Endothelial cell of umbilical vein (primary cell): ENCODE measurements at regions of chr3 and their contacts with region 1.

Region 1: DNA sequence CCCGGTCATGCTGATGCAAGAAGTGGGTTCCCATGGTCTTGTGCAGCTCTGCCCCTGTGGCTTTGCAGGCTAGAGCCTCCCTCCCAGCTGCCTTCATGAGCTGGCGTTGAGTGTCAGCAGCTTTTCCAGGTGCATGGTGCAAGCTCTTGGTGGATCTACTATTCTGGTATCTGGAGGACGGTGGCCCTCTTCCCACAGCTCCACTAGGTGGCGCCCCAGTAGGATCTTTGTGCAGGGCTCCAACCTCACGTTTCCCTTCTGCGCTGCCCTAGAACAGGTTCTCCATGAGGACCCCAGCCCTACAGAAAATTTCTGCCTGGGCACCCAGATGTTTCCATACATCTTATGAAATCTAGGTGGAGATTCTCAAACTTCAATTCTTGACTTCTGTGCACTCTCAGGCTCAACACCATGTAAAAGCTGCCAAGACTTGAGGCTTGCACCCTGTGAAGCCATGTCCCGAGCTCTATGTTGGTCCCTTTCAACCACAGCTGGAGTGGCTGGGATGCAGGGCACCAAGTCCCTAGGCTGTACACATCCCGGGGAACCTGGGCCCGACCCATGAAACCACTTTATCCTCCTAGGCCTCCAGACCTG is 238.4 kb upstream of the MDFIC2 start:
- DNase-seq: peak; percentile 75
- H3K4me3 ChIP-seq: no peak overlapping the region
- H3K27ac ChIP-seq: no peak overlapping the region
- H3K4me1 ChIP-seq: no peaks in the 10 kb centered on the region
- H3K27me3 ChIP-seq: no peaks in the 10 kb centered on the region
- CTCF ChIP-seq: peak; percentile 63 to 85
- POLR2A ChIP-seq: no peak

Region 2: DNA sequence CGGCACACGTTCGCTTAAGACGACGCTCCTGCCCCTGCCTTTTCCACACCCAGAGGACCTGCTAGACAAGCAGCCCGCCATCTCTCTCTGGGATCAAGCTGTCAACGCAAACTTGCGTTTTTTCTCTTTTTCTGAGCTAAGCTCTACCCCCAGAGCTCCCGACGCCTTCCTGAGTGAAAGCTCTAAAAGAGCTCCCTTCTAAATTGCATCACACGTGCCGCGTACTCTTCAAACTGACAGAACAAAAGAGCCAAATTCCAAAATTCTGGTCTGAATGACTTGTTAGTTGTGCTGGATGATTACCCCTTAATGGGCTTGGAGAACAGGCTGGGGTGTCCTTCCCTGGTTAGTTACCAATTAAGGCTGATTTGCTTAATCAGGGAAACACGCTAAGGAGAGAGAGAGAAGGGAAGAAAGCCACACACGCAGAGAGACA is 319.5 kb before region 1 on chr3:
- CTCF ChIA-PET with region 1: no interaction called
- POLR2A ChIA-PET with region 1: no interaction called
- dilution Hi-C with region 1: no loop called
- intact Hi-C with region 1: no loop called
- DNase-seq: no peak
- H3K4me3 ChIP-seq: no peak overlapping the region
- H3K27ac ChIP-seq: no peak overlapping the region
- H3K4me1 ChIP-seq: no peaks in the 10 kb centered on the region
- H3K27me3 ChIP-seq: no peaks in the 10 kb centered on the region
- CTCF ChIP-seq: no peak
- POLR2A ChIP-seq: no peak

Region 3: DNA sequence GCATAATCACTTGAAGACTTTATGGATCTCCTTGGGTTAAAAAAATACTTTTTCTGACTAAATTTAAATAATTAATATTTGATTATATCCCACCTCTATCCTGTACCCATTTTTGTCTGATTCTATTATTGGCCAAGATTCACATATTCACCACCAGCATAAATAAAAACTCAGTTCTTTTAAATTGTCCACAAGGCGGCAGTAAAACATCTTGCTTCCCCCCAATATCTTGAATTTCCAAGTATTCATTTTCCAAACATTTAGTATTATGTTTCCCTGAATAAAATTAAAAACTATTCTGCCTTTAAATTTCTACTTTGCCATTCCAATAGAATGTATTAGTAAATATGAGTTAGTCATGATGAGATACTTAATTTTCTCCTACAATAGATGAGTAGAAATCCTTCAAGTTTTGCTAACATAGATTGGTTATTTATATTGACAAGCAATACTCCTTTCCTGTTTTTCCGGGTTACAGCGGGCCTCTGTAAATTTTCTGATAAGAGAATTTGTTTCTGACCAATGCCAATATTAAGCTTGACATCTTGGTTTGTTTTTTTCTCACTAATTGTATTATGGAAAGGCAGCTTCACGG is 19.7 kb before region 1 on chr3:
- CTCF ChIA-PET with region 1: interaction called, 28 read pairs
- POLR2A ChIA-PET with region 1: no interaction called
- dilution Hi-C with region 1: no loop called
- intact Hi-C with region 1: no loop called
- DNase-seq: peak; percentile 52
- H3K4me3 ChIP-seq: no peak overlapping the region
- H3K27ac ChIP-seq: no peak overlapping the region
- H3K4me1 ChIP-seq: no peaks in the 10 kb centered on the region
- H3K27me3 ChIP-seq: peaks cover 7 to 9% of the 10 kb centered on the region in 2 experiments
- CTCF ChIP-seq: peak; percentile 7 to 28
- POLR2A ChIP-seq: no peak

Region 4: DNA sequence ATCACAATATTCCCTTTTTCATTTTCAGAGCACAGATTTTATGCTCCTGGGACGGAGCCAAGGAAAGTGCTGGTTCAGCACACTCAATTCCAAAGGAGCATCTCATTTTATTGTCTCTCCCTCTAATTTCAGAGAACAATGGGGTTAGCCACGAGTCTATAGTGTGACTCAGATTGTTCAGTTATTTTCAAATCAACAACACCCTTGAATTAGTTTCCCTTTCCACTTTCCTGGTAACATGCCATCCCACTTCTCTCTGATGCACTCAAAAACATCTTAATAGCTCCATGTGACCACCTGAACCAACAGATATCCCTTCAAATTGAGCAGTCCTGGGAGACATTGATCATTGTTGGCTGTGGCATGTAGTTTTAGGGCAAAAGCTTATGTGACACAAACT is 151.3 kb after region 1 on chr3:
- CTCF ChIA-PET with region 1: interaction called, 3 read pairs
- POLR2A ChIA-PET with region 1: no interaction called
- dilution Hi-C with region 1: no loop called
- intact Hi-C with region 1: loop called (anchors 10 kb)
- DNase-seq: peak; percentile 71
- H3K4me3 ChIP-seq: no peak overlapping the region
- H3K27ac ChIP-seq: no peak overlapping the region
- H3K4me1 ChIP-seq: no peaks in the 10 kb centered on the region
- H3K27me3 ChIP-seq: peaks cover 0 to 4% of the 10 kb centered on the region in 2 experiments
- CTCF ChIP-seq: no peak
- POLR2A ChIP-seq: no peak

Region 5: GRCh38 chr3:71006810-71007785 is 456.3 kb after region 1 on chr3:
- CTCF ChIA-PET with region 1: interaction called, 19 read pairs
- POLR2A ChIA-PET with region 1: no interaction called
- dilution Hi-C with region 1: no loop called
- intact Hi-C with region 1: loop called (anchors 1 kb)
- DNase-seq: peak; percentile 75
- H3K4me3 ChIP-seq: no peak overlapping the region
- H3K27ac ChIP-seq: peak overlapping the region; percentile 53
- H3K4me1 ChIP-seq: peaks cover 54% of the 10 kb centered on the region
- H3K27me3 ChIP-seq: no peaks in the 10 kb centered on the region
- CTCF ChIP-seq: peak in 1 of 2 donors; percentile 15
- POLR2A ChIP-seq: no peak

Region 6: GRCh38 chr3:71069797-71070196 is 519.0 kb after region 1 on chr3:
- CTCF ChIA-PET with region 1: interaction called, 9 read pairs
- POLR2A ChIA-PET with region 1: no interaction called
- dilution Hi-C with region 1: no loop called
- intact Hi-C with region 1: loop called (anchors 1 kb)
- DNase-seq: peak; percentile 74
- H3K4me3 ChIP-seq: no peak overlapping the region
- H3K27ac ChIP-seq: no peak overlapping the region
- H3K4me1 ChIP-seq: peaks cover 30% of the 10 kb centered on the region
- H3K27me3 ChIP-seq: no peaks in the 10 kb centered on the region
- CTCF ChIP-seq: peak; percentile 42 to 52
- POLR2A ChIP-seq: no peak

Region 7: DNA sequence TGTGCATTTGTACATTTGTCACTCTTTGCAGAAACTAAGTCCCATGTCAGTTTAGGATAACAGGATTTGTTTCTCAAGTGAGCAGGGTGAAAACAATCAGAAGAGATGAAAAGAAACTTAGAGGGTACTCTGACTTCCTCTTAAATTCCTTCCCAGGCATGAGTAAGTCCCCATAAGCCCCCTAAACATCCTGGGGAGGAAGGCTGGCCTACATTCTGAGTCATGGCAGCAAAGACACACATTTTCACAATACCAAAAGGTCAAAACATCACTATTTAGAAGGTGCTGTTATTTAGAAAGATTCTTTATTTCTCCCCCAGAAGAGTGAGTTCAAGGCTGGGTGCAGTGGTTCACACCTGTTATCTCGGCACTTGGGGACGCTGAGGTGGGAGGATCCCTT is 1040.3 kb after region 1 on chr3:
- CTCF ChIA-PET with region 1: interaction called, 19 read pairs
- POLR2A ChIA-PET with region 1: no interaction called
- dilution Hi-C with region 1: no loop called
- intact Hi-C with region 1: loop called (anchors 1 kb)
- DNase-seq: no peak
- H3K4me3 ChIP-seq: no peak overlapping the region
- H3K27ac ChIP-seq: no peak overlapping the region
- H3K4me1 ChIP-seq: peaks cover 11% of the 10 kb centered on the region
- H3K27me3 ChIP-seq: no peaks in the 10 kb centered on the region
- CTCF ChIP-seq: no peak
- POLR2A ChIP-seq: no peak

Region 8: GRCh38 chr3:71657831-71658530 is 1107.2 kb after region 1 on chr3:
- CTCF ChIA-PET with region 1: interaction called, 77 read pairs
- POLR2A ChIA-PET with region 1: no interaction called
- dilution Hi-C with region 1: no loop called
- intact Hi-C with region 1: no loop called
- DNase-seq: peak; percentile 99
- H3K4me3 ChIP-seq: no peak overlapping the region
- H3K27ac ChIP-seq: peak overlapping the region; percentile 32
- H3K4me1 ChIP-seq: peaks cover 18% of the 10 kb centered on the region
- H3K27me3 ChIP-seq: peaks cover 0 to 2% of the 10 kb centered on the region in 2 experiments
- CTCF ChIP-seq: no peak
- POLR2A ChIP-seq: no peak